Activated CD8-positive, alpha-beta memory T cell treated with anti-CD3 and anti-CD28 coated beads, Interleukin-2, amount 10 ng/mL, durations not matched to agents 7 days and 5 days (primary cell): ENCODE measurements at regions of chr17 and their contacts with region 1.

Region 1: GRCh38 chr17:27601069-27601975 is 29.7 kb upstream of the LGALS9 start:
- DNase-seq: peak; percentile 87
- ATAC-seq: peak; percentile 43
- H3K4me3 Mint-ChIP-seq: no peak overlapping the region
- H3K27ac Mint-ChIP-seq: no peak overlapping the region
- H3K4me1 Mint-ChIP-seq: peaks cover 19% of the 10 kb centered on the region
- H3K27me3 Mint-ChIP-seq: no peaks in the 10 kb centered on the region

Region 2: DNA sequence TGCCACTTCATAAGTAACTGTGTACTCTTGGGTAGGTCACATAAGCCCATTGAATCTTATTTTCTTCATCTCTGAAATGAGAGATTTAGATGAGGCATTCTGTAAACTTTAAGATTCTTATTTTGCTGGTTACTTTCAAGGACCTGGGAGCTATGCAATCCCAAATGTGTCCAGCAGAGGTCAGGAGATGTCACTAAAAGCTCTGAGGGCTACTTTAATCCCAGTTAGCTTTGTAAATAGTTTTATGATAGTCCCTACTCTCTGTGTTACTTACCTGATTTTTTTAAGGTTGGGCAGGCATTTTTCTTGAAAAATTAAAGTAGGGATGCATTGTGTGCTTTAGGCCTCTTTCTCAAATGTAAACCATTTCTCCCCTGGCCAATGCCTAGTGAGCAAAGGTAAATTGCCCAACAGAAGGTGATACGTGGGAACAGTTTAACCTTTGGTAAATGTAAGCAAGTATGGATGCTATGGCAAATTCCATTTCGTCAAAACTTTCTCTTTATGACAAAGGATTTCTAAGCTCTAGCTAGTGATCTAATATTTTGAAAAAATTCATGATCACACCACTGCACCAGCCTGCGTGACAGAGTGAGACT is 364.5 kb before region 1 on chr17:
- CTCF ChIA-PET with region 1: interaction called, 72 read pairs
- DNase-seq: peak; percentile 85
- ATAC-seq: peak; percentile 42
- H3K4me3 Mint-ChIP-seq: no peak overlapping the region
- H3K27ac Mint-ChIP-seq: no peak overlapping the region
- H3K4me1 Mint-ChIP-seq: peaks cover 33% of the 10 kb centered on the region
- H3K27me3 Mint-ChIP-seq: peaks cover 11% of the 10 kb centered on the region

Region 3: DNA sequence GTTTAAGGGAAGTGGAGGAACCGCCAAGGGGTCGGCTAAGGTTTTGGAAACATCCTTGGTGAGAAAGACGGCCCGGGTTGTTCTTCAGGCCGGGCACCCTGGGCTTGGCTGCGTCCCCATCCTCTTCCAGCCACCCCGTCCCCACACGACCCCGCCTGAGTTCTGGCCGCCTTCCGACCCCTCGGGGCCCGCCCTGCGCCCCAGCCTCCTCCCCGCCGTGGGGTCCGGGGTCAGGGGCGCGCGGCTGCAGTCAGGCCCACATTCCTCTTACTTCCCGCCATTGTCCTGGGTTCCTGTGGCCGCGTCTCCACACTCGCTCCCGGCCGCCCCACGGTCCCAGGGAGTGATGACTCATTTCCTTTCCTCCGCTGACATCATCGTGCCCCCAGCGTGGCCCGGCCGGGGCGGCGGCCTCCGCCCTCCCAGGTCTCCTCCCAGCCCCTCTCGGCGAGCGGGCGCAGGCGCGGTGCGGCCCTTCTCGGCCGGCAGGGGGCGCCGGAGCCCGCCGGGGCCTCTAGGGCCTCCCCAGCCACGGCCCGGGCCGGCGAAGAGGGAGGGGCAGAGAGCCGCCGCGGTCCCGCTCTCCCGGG is 247.8 kb before region 1 on chr17:
- CTCF ChIA-PET with region 1: interaction called, 124 read pairs
- DNase-seq: peak; percentile 92
- ATAC-seq: peak; percentile 93
- H3K4me3 Mint-ChIP-seq: peak overlapping the region; percentile 80
- H3K27ac Mint-ChIP-seq: peak overlapping the region; percentile 91
- H3K4me1 Mint-ChIP-seq: peaks cover 27% of the 10 kb centered on the region
- H3K27me3 Mint-ChIP-seq: no peaks in the 10 kb centered on the region

Region 4: GRCh38 chr17:27455914-27456680 is 145.2 kb before region 1 on chr17 and contains the start of gene KSR1:
- CTCF ChIA-PET with region 1: interaction called, 81 read pairs
- DNase-seq: peak; percentile 88
- ATAC-seq: peak; percentile 92
- H3K4me3 Mint-ChIP-seq: peak within 1 kb of the TSS; percentile 81
- H3K27ac Mint-ChIP-seq: peak within 1 kb of the TSS; percentile 69
- H3K4me1 Mint-ChIP-seq: peaks cover 58% of the 10 kb centered on the region
- H3K27me3 Mint-ChIP-seq: no peaks in the 10 kb centered on the region
- total RNA-seq, gene KSR1: 56.6 to 70.4 TPM

Region 5: DNA sequence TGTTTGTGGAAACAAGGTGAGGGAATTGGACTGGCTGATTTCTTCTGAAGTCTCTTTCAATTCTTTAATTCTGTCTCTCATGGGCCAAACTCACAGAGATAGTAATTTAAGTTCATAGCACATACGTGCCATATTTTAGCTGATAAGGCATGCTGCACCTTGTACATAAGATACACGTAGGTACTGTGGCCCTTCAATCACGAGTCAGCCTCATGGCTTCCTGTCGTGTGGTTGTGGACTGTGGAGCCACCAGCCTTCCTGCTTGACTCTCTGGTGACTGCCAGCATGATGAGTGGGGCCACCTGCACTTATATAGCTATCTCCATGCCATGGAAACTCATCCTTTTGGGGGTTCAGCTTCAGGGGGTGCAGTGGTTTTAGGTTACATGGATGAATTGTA is 120.0 kb before region 1 on chr17:
- CTCF ChIA-PET with region 1: interaction called, 11 read pairs
- DNase-seq: peak; percentile 91
- ATAC-seq: peak; percentile 97
- H3K4me3 Mint-ChIP-seq: peak overlapping the region; percentile 32
- H3K27ac Mint-ChIP-seq: peak overlapping the region; percentile 77
- H3K4me1 Mint-ChIP-seq: peaks cover 74% of the 10 kb centered on the region
- H3K27me3 Mint-ChIP-seq: no peaks in the 10 kb centered on the region

Region 6: GRCh38 chr17:27578718-27579085 is 22.6 kb before region 1 on chr17:
- CTCF ChIA-PET with region 1: interaction called, 48 read pairs
- DNase-seq: peak; percentile 86
- ATAC-seq: peak; percentile 78
- H3K4me3 Mint-ChIP-seq: peak overlapping the region; percentile 29
- H3K27ac Mint-ChIP-seq: peak overlapping the region; percentile 88
- H3K4me1 Mint-ChIP-seq: peaks cover 81% of the 10 kb centered on the region
- H3K27me3 Mint-ChIP-seq: no peaks in the 10 kb centered on the region

Region 7: GRCh38 chr17:27630607-27631410 is 29.5 kb after region 1 on chr17 and contains the start of gene LGALS9:
- CTCF ChIA-PET with region 1: interaction called, 32 read pairs
- DNase-seq: peak; percentile 72
- ATAC-seq: peak; percentile 84
- H3K4me3 Mint-ChIP-seq: peak within 1 kb of the TSS; percentile 93
- H3K27ac Mint-ChIP-seq: peak within 1 kb of the TSS; percentile 94
- H3K4me1 Mint-ChIP-seq: peaks cover 68% of the 10 kb centered on the region
- H3K27me3 Mint-ChIP-seq: no peaks in the 10 kb centered on the region
- total RNA-seq, gene LGALS9: 150 to 305 TPM

Region 8: GRCh38 chr17:27692766-27693165 is 91.4 kb after region 1 on chr17:
- CTCF ChIA-PET with region 1: no interaction called
- DNase-seq: no peak
- ATAC-seq: no peak
- H3K4me3 Mint-ChIP-seq: no peak overlapping the region
- H3K27ac Mint-ChIP-seq: no peak overlapping the region
- H3K4me1 Mint-ChIP-seq: no peaks in the 10 kb centered on the region
- H3K27me3 Mint-ChIP-seq: peaks cover 15% of the 10 kb centered on the region